Ovary (tissue), 10 donors: ENCODE measurements at regions of chr7 and their contacts with region 1.

Region 1: DNA sequence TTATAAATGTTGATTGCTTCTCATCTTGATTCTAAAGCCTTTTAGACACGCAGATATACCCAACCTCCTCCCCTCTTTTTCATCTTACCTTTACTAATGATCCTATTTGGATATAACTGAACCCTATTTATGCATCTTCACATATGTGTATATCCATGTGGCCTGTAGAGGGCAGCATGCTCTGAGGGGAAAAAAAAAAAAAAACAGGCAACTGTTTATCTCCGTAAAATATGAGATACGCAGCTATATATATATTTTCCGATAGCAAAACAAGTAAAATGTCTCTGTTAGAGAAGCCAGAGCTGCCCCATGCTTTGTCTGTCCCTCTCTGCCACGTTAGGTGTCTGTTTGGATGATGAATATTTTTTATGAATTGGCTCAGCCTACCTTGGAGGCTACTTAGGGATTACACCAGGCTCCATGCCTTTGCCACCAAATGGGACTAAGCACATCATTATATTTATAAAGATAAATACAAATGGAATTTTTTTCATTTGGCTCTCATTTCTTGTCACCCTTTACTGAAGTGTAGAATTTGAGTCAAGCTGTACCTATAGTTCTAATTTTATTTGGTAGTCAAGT is 174.8 kb upstream of the FZD1 start:
- DNase-seq: no peak
- H3K4me3 ChIP-seq: peak overlapping the region; percentile 13
- H3K27ac ChIP-seq: no peak overlapping the region
- H3K4me1 ChIP-seq: no peaks in the 10 kb centered on the region
- H3K27me3 ChIP-seq: no peaks in the 10 kb centered on the region
- CTCF ChIP-seq: peak; percentile 33 to 71 (median 39)
- EP300 ChIP-seq: no peak
- POLR2A ChIP-seq: no peak

Region 2: DNA sequence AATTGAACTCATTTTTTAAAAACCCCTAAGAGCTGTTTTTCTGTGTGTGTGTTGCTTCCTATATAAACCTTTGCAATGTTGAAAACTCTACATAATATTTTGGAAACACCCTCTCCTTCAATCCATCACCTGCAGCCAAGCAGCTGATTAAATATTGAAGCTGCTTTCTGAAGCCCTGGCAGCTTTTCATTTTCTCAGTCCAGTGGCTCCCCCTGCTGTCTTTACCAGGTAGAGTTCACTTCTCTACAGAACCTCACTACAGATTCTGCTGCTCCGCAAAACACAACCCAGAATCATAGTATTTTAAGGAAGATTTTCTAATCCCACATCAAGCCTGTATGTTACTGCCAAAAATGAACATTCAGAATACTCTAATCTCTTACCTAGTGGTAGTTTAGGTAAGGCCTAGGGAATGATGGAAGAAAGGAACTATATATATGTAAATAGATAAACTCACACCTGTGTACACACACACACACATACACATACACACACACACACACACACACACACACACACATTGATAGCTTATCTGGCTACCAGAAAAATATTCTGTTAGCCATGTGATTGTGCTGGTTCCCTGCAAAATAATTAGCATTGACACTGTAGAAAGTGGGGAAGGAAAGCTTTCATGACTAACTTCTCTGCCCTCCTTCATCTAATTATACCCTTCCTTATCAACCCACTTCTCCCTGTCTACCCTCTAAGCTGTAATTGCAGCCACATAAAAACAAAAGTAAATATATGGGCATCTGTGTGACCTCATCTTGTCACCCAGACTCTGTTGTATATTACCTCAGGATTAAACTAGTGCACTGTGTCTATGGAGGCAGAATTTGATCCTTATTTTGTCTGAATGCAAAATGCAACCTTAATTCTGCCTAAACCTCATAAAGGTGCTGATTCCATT is 54.8 kb before region 1 on chr7:
- intact Hi-C with region 1: no loop called
- DNase-seq: peak in 4 of 5 donors; percentile 18 to 42 (median 28)
- H3K4me3 ChIP-seq: no peak overlapping the region
- H3K27ac ChIP-seq: no peak overlapping the region
- H3K4me1 ChIP-seq: no peaks in the 10 kb centered on the region
- H3K27me3 ChIP-seq: no peaks in the 10 kb centered on the region
- CTCF ChIP-seq: peak in 1 of 3 donors; percentile 37
- EP300 ChIP-seq: no peak
- POLR2A ChIP-seq: no peak

Region 3: GRCh38 chr7:91264046-91264923 is 174.8 kb after region 1 on chr7 and contains the start of gene FZD1:
- intact Hi-C with region 1: loop called in 2 of 4 experiments (anchors 10 kb)
- DNase-seq: peak; percentile 95 to 97 (median 96)
- H3K4me3 ChIP-seq: peak within 1 kb of the TSS; percentile 95
- H3K27ac ChIP-seq: peak within 1 kb of the TSS; percentile 80 to 97
- H3K4me1 ChIP-seq: peaks cover 9% of the 10 kb centered on the region
- H3K27me3 ChIP-seq: no peaks in the 10 kb centered on the region
- CTCF ChIP-seq: peak in 1 of 3 donors; percentile 38
- EP300 ChIP-seq: no peak
- POLR2A ChIP-seq: peak; percentile 27
- total RNA-seq, gene FZD1: 11.8 to 33.6 (median 21.8) TPM

Region 4: DNA sequence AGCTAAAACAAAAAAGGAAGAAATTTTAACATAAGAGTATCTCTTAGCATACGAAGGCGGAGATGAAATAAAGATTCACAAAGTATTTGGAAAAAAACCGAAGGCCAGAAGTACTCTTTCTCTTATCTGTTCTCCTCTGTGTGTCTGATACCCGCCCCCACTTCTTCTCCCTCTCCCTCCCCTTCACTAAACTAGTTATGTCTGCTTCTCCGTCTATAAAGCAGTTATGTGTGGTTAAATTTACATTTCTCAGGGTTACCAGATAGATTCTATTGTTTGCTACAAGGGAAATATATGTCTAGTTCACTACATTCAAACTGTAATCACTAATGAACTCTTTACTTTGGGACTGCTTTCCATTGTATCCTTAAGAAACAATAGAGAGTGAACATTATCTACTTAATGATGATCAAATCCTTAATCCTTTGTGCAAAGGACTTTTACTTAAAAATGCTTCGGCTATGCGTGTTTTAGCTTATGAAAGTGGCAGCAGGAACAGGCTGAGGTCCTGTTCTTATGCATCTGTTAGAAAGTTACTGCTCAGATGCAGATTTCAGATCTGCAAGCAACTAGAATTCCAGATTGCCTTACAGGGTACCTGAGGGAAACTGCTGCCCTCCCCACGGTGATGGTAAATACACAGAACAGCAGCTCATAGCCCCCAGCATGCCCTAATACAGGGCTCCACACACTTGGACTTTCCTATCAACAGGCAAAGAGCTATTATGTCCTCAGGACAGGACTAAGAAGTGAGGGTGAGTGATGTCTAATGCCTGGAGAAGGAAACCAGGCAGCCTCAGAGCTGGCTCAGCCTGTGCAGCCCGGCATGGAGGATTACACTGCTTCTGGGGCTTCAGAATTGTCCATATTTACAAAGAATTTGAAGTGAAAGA is 448.0 kb after region 1 on chr7:
- intact Hi-C with region 1: no loop called
- DNase-seq: no peak
- H3K4me3 ChIP-seq: no peak overlapping the region
- H3K27ac ChIP-seq: no peak overlapping the region
- H3K4me1 ChIP-seq: no peaks in the 10 kb centered on the region
- H3K27me3 ChIP-seq: no peaks in the 10 kb centered on the region
- CTCF ChIP-seq: no peak
- EP300 ChIP-seq: no peak
- POLR2A ChIP-seq: no peak

Region 5: DNA sequence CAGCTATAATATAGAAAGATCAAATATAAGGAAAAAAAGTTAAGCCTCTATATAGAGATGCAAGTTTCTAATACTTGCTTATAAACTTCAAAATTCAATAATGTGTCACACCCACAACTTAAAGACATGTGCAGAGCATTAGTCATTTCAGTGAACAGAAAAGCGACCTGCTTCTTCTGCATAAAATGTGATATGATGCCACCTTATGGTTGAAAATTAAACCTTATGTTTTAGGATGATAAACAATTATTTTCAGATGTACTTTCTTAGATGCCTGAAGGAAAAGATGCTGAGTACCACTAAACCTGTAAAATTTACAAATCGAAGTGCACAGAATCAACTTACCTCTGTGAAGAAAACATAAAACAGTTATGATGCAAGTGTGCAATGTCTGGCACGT is 695.0 kb after region 1 on chr7:
- intact Hi-C with region 1: loop called in 2 of 4 experiments (anchors 10 kb)
- DNase-seq: no peak
- H3K4me3 ChIP-seq: no peak overlapping the region
- H3K27ac ChIP-seq: no peak overlapping the region
- H3K4me1 ChIP-seq: peaks cover 2% of the 10 kb centered on the region
- H3K27me3 ChIP-seq: no peaks in the 10 kb centered on the region
- CTCF ChIP-seq: peak in 1 of 3 donors; percentile 24
- EP300 ChIP-seq: no peak
- POLR2A ChIP-seq: no peak